ENCODE measurements at regions of chr5 and their contacts with region 1.

Region 1: GRCh38 chr5:51606921-51607320 is 223.7 kb downstream of the ISL1 start:
- DNase-seq: no peak
- ATAC-seq: no peak
- H3K4me3 ChIP-seq: no peak overlapping the region
- H3K27ac ChIP-seq: no peak overlapping the region
- H3K4me1 ChIP-seq: no peaks in the 10 kb centered on the region
- H3K27me3 ChIP-seq: no peaks in the 10 kb centered on the region
- CTCF ChIP-seq: no peak
- EP300 ChIP-seq: no peak
- POLR2A ChIP-seq: no peak
- RAD21 ChIP-seq: no peak

Region 2: GRCh38 chr5:51573835-51574234 is 33.1 kb before region 1 on chr5:
- CTCF ChIA-PET with region 1: no interaction called
- POLR2A ChIA-PET with region 1: no interaction called
- in situ Hi-C with region 1: no loop called
- intact Hi-C with region 1: loop called (anchors 1 kb)
- DNase-seq: no peak
- ATAC-seq: no peak
- H3K4me3 ChIP-seq: no peak overlapping the region
- H3K27ac ChIP-seq: no peak overlapping the region
- H3K4me1 ChIP-seq: no peaks in the 10 kb centered on the region
- H3K27me3 ChIP-seq: no peaks in the 10 kb centered on the region
- CTCF ChIP-seq: no peak
- EP300 ChIP-seq: no peak
- POLR2A ChIP-seq: no peak
- RAD21 ChIP-seq: no peak

Region 3: DNA sequence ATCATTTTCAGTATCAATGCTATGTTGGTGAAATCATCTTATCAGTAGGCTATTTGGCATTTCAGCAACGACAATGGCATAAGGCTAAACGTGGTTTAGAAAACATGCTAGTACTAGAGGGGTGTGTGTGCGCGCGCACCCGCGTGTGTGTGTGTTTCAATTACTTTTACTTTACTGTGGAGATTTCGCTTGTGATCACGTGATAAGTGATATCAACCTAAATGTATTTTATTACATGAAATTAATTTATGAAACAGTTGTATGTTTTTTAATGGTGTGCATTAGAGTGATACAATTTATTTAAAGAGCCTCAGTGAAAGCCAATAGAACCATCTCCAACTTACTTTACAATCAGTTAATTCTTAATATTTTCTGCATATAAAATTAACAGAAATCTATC is 592.9 kb after region 1 on chr5:
- CTCF ChIA-PET with region 1: no interaction called
- POLR2A ChIA-PET with region 1: no interaction called
- in situ Hi-C with region 1: no loop called
- intact Hi-C with region 1: no loop called
- DNase-seq: no peak
- ATAC-seq: no peak
- H3K4me3 ChIP-seq: no peak overlapping the region
- H3K27ac ChIP-seq: no peak overlapping the region
- H3K4me1 ChIP-seq: no peaks in the 10 kb centered on the region
- H3K27me3 ChIP-seq: no peaks in the 10 kb centered on the region; a peak in 1 of 5 replicates
- CTCF ChIP-seq: no peak
- EP300 ChIP-seq: no peak
- POLR2A ChIP-seq: no peak
- RAD21 ChIP-seq: no peak

Measured in HepG2 (cell line).